ENCODE measurements at regions of chr16 and their contacts with region 1.

Region 1: DNA sequence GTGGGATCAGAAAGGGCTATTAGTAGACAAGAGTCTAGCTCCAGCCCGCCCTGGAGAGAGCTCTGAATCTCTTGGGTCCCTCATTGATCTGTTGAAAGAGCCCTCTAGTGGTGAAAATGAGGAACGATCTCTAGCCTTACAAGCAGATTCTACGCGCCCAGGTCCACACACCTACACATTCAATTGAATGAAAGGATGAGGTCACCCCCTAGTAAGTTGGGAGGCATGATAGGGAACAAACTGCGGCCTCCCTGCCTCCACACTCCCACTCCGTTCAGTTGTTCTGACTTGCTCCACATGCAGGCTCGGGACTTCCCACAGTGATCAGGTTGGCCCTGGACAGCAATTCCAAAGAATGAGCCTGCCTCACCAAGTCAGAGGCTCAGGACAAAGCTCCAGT is 2.9 kb upstream of the CACNG3 start:
- DNase-seq: peak in 1 of 2 donors; percentile 72
- ATAC-seq: peak; percentile 53 to 73 (median 63)
- H3K4me3 ChIP-seq: no peak overlapping the region
- H3K4me3 Mint-ChIP-seq: no peak overlapping the region
- H3K27ac ChIP-seq: no peak overlapping the region
- H3K27ac Mint-ChIP-seq: no peak overlapping the region
- H3K4me1 ChIP-seq: no peaks in the 10 kb centered on the region
- H3K4me1 Mint-ChIP-seq: peaks cover 0 to 4% of the 10 kb centered on the region in 2 donors
- H3K27me3 ChIP-seq: peaks cover 23% of the 10 kb centered on the region
- H3K27me3 Mint-ChIP-seq: peaks cover 40 to 65% of the 10 kb centered on the region in 2 donors
- CTCF ChIP-seq: peak; percentile 85

Region 2: GRCh38 chr16:23734176-23734893 is 518.9 kb before region 1 on chr16:
- intact Hi-C with region 1: loop called (anchors 2 kb)
- DNase-seq: no peak
- ATAC-seq: no peak
- H3K4me3 ChIP-seq: no peak overlapping the region
- H3K4me3 Mint-ChIP-seq: no peak overlapping the region
- H3K27ac ChIP-seq: no peak overlapping the region
- H3K27ac Mint-ChIP-seq: no peak overlapping the region
- H3K4me1 ChIP-seq: no peaks in the 10 kb centered on the region
- H3K4me1 Mint-ChIP-seq: peaks cover 0 to 5% of the 10 kb centered on the region in 2 donors
- H3K27me3 ChIP-seq: no peaks in the 10 kb centered on the region
- H3K27me3 Mint-ChIP-seq: peaks cover 7 to 8% of the 10 kb centered on the region in 2 donors
- CTCF ChIP-seq: no peak

Region 3: DNA sequence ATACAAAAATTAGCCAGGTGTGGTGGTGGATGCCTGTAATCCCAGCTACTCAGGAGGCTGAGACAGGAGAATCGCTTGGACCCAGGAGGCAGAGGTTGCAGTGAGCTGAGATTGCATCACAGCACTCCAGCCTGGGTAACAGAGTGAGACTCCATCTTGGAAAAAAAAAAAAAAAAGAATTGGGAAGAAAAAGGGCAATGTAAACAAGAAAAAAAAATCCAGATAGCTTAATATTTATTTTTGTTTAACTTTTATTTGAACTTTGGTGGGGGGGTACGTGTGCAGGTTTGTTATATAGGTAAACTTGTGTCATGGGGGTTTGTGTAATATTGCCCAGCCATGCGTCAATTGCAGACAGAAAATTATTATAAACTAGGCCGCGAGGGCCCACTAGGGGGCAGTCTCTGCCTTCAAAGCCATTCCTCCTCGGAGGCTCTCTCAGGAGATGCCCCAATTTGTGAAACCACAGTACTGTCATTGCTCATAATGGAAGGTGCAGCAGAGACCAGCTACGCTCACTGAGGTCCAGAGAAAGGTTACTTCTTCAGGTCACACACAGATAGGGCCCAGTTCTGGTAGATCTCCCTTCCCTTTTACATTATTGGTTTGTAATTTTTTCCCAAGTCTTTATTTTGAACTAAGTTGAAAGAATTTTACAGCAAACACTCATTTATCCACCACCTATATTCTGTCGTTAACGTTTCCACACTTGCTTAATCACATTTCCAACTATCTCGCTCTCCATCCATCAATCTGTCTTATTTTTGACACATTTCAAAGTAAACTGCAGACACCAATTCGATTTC is 211.2 kb before region 1 on chr16:
- intact Hi-C with region 1: loop called (anchors 1 kb)
- DNase-seq: peak; percentile 72 to 86
- ATAC-seq: peak; percentile 94 to 99 (median 98)
- H3K4me3 ChIP-seq: no peak overlapping the region
- H3K4me3 Mint-ChIP-seq: no peak overlapping the region
- H3K27ac ChIP-seq: no peak overlapping the region
- H3K27ac Mint-ChIP-seq: peak overlapping the region in 1 of 2 donors; percentile 21
- H3K4me1 ChIP-seq: peaks cover 4% of the 10 kb centered on the region
- H3K4me1 Mint-ChIP-seq: peaks cover 25% of the 10 kb centered on the region in 2 donors
- H3K27me3 ChIP-seq: no peaks in the 10 kb centered on the region
- H3K27me3 Mint-ChIP-seq: no peaks in the 10 kb centered on the region
- CTCF ChIP-seq: peak; percentile 88

Region 4: GRCh38 chr16:24539291-24539849 is 286.2 kb after region 1 on chr16 and contains the start of gene RBBP6:
- intact Hi-C with region 1: no loop called
- DNase-seq: peak; percentile 95 to 97
- ATAC-seq: peak; percentile 85 to 98 (median 90)
- H3K4me3 ChIP-seq: peak within 1 kb of the TSS; percentile 97
- H3K4me3 Mint-ChIP-seq: peak within 1 kb of the TSS; percentile 100
- H3K27ac ChIP-seq: peak within 1 kb of the TSS; percentile 100
- H3K27ac Mint-ChIP-seq: peak within 1 kb of the TSS; percentile 99
- H3K4me1 ChIP-seq: peaks cover 20% of the 10 kb centered on the region
- H3K4me1 Mint-ChIP-seq: peaks cover 43 to 44% of the 10 kb centered on the region in 2 donors
- H3K27me3 ChIP-seq: no peaks in the 10 kb centered on the region
- H3K27me3 Mint-ChIP-seq: no peaks in the 10 kb centered on the region
- CTCF ChIP-seq: peak; percentile 18
- total RNA-seq, gene RBBP6: 155 to 219 (median 173) TPM

Measured in natural killer cell (primary cell).